A673 (cell line): ENCODE measurements at regions of chr16 and their contacts with region 1.

Region 1: GRCh38 chr16:3046506-3047386 is at the start of gene MMP25:
- DNase-seq: no peak
- H3K4me3 ChIP-seq: peak within 1 kb of the TSS; percentile 51
- H3K27ac ChIP-seq: no peak within 1 kb of the TSS
- H3K4me1 ChIP-seq: no peaks in the 10 kb centered on the region
- H3K27me3 ChIP-seq: peaks cover 20% of the 10 kb centered on the region
- CTCF ChIP-seq: no peak
- total RNA-seq, gene MMP25: 0.80 and 1.3 TPM in 2 replicates

Region 2: DNA sequence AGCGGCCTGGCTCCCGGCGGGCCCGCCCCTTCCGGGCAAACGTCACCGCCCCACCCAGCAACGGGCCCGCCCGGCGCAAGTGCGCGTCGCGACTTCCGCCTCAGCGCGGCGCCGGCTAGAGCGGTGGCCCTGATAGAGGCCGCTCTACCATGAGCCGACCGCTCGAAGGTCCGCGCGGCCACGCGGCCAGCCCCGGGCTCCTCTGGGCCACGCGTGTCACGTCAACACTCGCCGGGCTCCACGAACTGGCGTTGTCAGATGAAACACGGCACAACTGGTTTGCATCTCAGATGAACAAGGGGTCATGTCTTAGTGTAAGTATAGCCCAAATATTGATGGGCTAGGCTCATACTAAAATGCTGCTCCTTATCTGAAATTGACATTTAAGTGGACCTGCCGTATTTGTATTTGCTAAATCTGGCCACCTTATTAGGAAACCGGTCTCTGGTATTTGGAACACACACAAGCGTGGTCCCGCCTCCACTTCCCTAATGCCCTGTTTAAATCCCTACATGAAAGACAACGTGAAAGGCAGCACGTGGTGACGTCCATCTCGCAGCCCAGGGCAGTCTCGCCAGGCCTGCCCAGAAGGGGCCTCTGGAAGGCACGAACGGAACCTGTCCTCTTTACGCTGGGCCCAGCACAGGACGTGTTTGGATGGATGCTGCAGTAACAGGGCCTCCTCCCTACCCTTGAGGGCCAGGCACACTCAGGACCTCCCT is 1036.8 kb before region 1 on chr16 and contains the start of gene ZNF598:
- CTCF ChIA-PET with region 1: no interaction called
- POLR2A ChIA-PET with region 1: no interaction called
- intact Hi-C with region 1: no loop called
- DNase-seq: peak; percentile 93
- H3K4me3 ChIP-seq: peak within 1 kb of the TSS; percentile 99
- H3K27ac ChIP-seq: peak within 1 kb of the TSS; percentile 93
- H3K4me1 ChIP-seq: peaks cover 38% of the 10 kb centered on the region
- H3K27me3 ChIP-seq: no peaks in the 10 kb centered on the region
- CTCF ChIP-seq: no peak
- total RNA-seq, gene ZNF598: 68.0 and 75.8 TPM in 2 replicates

Region 3: DNA sequence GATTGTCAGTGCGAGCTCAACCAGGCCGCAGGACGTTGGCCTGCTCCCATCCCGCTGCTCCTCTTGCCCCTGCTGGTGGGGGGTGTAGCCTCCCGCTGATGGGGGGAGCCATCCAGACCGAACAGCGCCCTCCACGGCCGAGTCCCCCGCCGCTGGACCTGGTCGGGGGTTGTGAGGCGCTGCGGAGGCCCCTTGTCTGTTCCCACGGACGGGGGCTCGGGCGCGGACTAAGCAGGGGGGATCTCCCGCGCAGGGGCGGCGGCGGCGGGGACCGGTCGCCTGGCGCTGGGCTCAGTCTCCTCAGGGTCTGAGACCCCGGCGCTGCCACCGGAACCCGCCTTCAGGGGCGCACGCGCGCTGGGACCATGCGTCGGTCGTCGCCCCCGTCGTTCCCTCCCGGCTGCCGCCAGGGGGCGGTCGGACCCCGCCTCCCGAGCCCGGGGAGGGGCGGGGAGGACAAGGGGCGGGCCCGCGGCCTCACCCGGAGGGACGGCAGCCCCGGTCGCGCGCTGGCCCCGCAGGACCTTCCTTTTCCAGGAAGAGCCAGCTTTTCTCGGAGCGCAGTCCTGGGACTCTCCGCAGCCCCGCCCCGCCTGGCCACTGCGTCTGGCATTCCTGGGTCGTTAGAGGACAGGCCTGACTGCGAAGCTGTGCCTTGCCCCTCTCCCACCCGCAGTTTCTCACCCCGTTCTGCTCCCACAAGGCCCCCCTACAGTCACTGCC is 12.4 kb after region 1 on chr16:
- CTCF ChIA-PET with region 1: interaction called, 12 read pairs
- POLR2A ChIA-PET with region 1: no interaction called
- intact Hi-C with region 1: no loop called
- DNase-seq: peak; percentile 87
- H3K4me3 ChIP-seq: peak overlapping the region; percentile 93
- H3K27ac ChIP-seq: peak overlapping the region; percentile 88
- H3K4me1 ChIP-seq: peaks cover 5% of the 10 kb centered on the region
- H3K27me3 ChIP-seq: no peaks in the 10 kb centered on the region
- CTCF ChIP-seq: peak; percentile 69

Region 4: DNA sequence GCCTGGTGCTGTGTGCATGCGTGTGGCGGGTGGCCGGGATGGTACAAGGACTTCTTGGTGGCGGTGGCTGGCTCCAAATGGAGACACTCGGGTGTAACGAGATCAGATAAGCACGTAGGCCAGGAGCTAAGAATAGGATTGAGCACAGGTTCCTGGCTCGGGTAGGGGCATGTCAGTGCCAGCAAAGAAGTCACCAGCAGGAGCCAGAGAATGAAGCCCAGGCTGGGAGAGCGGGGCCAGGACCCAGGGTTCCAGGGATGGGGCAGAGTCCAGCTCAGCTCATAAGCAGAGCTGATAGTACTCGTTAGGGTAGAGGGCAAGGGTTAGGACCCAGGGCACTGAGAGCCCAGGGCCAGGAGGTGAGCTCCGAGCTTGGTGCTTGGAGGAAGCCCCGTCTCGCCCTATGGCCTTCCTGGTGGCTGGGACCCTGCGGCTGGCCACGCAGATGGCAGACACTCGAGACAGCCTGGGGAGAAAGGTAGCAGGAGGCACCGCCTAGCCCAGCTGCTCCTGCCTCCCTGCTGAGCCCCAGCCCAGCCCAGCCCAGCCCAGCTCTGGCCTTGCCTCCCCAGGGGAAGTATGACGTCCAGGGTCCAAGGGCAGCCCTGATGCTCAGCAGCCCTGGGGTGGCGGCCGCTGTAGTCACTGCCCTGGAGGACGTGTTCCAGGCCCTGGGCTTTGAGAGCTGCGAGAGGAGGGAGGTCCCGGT is 97.0 kb after region 1 on chr16:
- CTCF ChIA-PET with region 1: no interaction called
- POLR2A ChIA-PET with region 1: no interaction called
- intact Hi-C with region 1: no loop called
- DNase-seq: no peak
- H3K4me3 ChIP-seq: no peak overlapping the region
- H3K27ac ChIP-seq: no peak overlapping the region
- H3K4me1 ChIP-seq: no peaks in the 10 kb centered on the region
- H3K27me3 ChIP-seq: no peaks in the 10 kb centered on the region
- CTCF ChIP-seq: no peak